ENCODE measurements at regions of chr12 and their contacts with region 1.

Region 1: GRCh38 chr12:120892265-120892664 is 11.9 kb downstream of the SPPL3 start:
- DNase-seq: no peak
- ATAC-seq: peak; percentile 57
- H3K4me3 ChIP-seq: no peak overlapping the region
- H3K4me3 Mint-ChIP-seq: peak overlapping the region in 6 of 10 donors; percentile 14 to 63 (median 46)
- H3K27ac ChIP-seq: no peak overlapping the region
- H3K27ac Mint-ChIP-seq: peak overlapping the region in 4 of 9 donors; percentile 13 to 41 (median 16)
- H3K4me1 ChIP-seq: peaks cover 5 to 36% of the 10 kb centered on the region in 2 donors
- H3K4me1 Mint-ChIP-seq: peaks cover 32 to 84% (median 67%) of the 10 kb centered on the region in 7 donors
- H3K27me3 ChIP-seq: no peaks in the 10 kb centered on the region
- H3K27me3 Mint-ChIP-seq: no peaks in the 10 kb centered on the region

Region 2: DNA sequence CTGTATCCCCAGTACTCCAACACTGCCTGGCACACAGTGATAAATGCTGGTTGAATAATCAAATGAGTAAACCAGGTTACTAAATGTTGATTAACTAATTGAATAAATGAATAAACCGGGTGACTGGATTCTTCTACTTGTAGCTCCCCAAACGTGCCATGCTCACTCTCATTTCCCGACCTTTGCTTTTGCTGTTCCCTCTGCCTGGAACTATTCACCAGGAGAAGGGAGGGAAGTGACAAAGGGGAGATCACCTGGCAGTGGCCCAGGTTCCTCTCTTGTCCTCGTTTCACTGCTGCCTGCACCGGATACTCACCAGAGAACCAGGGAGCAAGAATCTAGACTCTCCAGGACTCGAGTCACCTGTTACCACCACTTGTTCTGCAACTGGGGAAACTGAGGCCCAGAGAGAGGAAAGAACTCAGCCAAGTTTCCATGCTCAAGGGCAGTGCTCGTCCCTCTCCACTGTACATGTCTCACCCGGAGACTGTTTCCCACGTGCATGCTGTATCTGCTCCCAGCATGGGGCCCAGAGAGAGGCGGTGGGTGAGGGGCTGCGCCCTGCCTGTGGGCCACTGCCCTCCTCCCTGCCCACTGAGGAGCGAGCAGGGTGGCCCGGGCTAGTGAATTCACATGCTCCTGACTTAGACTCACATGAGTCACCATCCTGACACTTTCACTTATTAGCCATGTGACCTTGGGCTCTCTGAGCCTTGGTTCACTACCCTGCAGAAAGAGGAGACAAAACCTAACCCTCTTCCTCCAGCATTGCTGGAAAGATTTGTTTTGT is 293.4 kb before region 1 on chr12:
- CTCF ChIA-PET with region 1: no interaction called
- POLR2A ChIA-PET with region 1: no interaction called
- intact Hi-C with region 1: no loop called
- DNase-seq: no peak
- ATAC-seq: peak; percentile 77
- H3K4me3 ChIP-seq: no peak overlapping the region
- H3K4me3 Mint-ChIP-seq: no peak overlapping the region
- H3K27ac ChIP-seq: no peak overlapping the region
- H3K27ac Mint-ChIP-seq: no peak overlapping the region
- H3K4me1 ChIP-seq: no peaks in the 10 kb centered on the region
- H3K4me1 Mint-ChIP-seq: peaks cover 0 to 2% (median 0%) of the 10 kb centered on the region in 7 donors
- H3K27me3 ChIP-seq: no peaks in the 10 kb centered on the region
- H3K27me3 Mint-ChIP-seq: peaks cover 0 to 22% (median 10%) of the 10 kb centered on the region in 5 donors

Region 3: GRCh38 chr12:120799243-120800045 is 92.8 kb before region 1 on chr12:
- CTCF ChIA-PET with region 1: no interaction called
- POLR2A ChIA-PET with region 1: no interaction called
- intact Hi-C with region 1: loop called in 1 of 2 experiments (anchors 10 kb)
- DNase-seq: no peak
- ATAC-seq: no peak
- H3K4me3 ChIP-seq: no peak overlapping the region
- H3K4me3 Mint-ChIP-seq: no peak overlapping the region
- H3K27ac ChIP-seq: no peak overlapping the region
- H3K27ac Mint-ChIP-seq: peak overlapping the region in 5 of 9 donors; percentile 8 to 62 (median 28)
- H3K4me1 ChIP-seq: peaks cover 0 to 9% of the 10 kb centered on the region in 2 donors
- H3K4me1 Mint-ChIP-seq: peaks cover 22 to 59% (median 44%) of the 10 kb centered on the region in 7 donors
- H3K27me3 ChIP-seq: no peaks in the 10 kb centered on the region
- H3K27me3 Mint-ChIP-seq: no peaks in the 10 kb centered on the region

Region 4: GRCh38 chr12:121989276-121990113 is 1097.2 kb after region 1 on chr12:
- CTCF ChIA-PET with region 1: no interaction called
- POLR2A ChIA-PET with region 1: no interaction called
- intact Hi-C with region 1: loop called in 1 of 2 experiments (anchors 5 kb)
- DNase-seq: no peak
- ATAC-seq: no peak
- H3K4me3 ChIP-seq: no peak overlapping the region
- H3K4me3 Mint-ChIP-seq: no peak overlapping the region
- H3K27ac ChIP-seq: no peak overlapping the region
- H3K27ac Mint-ChIP-seq: no peak overlapping the region
- H3K4me1 ChIP-seq: peaks cover 0 to 4% of the 10 kb centered on the region in 2 donors
- H3K4me1 Mint-ChIP-seq: peaks cover 0 to 16% (median 6%) of the 10 kb centered on the region in 7 donors
- H3K27me3 ChIP-seq: no peaks in the 10 kb centered on the region
- H3K27me3 Mint-ChIP-seq: no peaks in the 10 kb centered on the region

Measured in naive thymus-derived CD4-positive, alpha-beta T cell (primary cell).